ENCODE measurements at regions of chr1 and their contacts with region 1.

Region 1: GRCh38 chr1:20376880-20377494 is 86.3 kb downstream of the VWA5B1 start:
- DNase-seq: peak; percentile 76
- CTCF ChIP-seq: peak; percentile 73

Region 2: GRCh38 chr1:20348326-20348915 is 28.6 kb before region 1 on chr1:
- CTCF ChIA-PET with region 1: no interaction called
- POLR2A ChIA-PET with region 1: no interaction called
- DNase-seq: no peak
- CTCF ChIP-seq: no peak

Region 3: DNA sequence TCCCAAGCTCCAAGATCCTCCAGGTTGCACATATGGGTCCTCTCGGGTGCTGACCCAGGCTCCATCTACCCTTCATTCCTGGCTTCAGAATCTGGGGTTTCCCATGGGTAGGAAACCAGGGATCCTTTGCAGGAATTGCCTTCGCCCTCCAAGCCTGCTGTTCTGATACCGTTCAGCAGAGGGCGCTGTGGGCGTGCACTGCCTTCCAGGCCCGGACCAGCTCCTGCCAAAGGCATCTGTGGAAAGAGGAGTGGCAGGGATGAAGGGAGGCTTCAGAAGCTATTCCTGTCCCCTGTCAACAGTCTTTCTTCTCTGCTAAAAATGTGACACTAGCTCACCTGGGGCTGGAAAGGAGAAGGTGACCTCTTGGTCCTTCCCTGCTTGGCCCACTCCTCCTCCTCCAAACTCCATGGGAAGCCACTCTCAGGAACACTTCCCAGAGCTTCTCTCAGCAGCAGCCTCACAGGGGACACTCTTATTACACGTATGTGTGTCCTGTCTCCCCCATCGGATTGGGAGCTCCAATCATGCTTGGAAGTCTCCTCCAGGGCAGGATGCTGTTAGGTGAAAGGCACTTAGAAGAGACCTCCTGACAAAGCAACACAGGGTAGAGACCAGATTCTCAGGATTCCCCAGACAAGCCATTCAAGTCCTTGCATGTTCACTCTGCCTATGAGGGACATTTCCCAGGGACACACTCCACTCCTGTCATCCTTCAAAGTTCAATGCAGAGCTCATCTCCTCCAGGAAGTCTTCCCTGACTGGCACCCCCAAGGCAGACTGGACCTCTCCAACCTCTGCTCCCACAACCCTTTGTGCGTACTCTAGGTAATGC is 15.0 kb before region 1 on chr1:
- CTCF ChIA-PET with region 1: interaction called, 57 read pairs
- POLR2A ChIA-PET with region 1: no interaction called
- DNase-seq: peak; percentile 52
- CTCF ChIP-seq: peak; percentile 53

Region 4: GRCh38 chr1:20430355-20431175 is 53.6 kb after region 1 on chr1:
- CTCF ChIA-PET with region 1: interaction called, 20 read pairs
- POLR2A ChIA-PET with region 1: no interaction called
- DNase-seq: peak; percentile 68
- CTCF ChIP-seq: peak; percentile 79